Activated T-helper 1 cell treated with anti-CD3 and anti-CD28 coated beads, Interleukin-12 subunit alpha, Interleukin-12 subunit beta, Interleukin-2, Interleukin-4 antibody, amounts not matched to agents 30 ng/mL and 10 ng/mL and 1 ng/mL, durations not matched to agents 14 hours and 24 hours and 36 hours (primary cell): ENCODE measurements at regions of chr11 and their contacts with region 1.

Region 1: DNA sequence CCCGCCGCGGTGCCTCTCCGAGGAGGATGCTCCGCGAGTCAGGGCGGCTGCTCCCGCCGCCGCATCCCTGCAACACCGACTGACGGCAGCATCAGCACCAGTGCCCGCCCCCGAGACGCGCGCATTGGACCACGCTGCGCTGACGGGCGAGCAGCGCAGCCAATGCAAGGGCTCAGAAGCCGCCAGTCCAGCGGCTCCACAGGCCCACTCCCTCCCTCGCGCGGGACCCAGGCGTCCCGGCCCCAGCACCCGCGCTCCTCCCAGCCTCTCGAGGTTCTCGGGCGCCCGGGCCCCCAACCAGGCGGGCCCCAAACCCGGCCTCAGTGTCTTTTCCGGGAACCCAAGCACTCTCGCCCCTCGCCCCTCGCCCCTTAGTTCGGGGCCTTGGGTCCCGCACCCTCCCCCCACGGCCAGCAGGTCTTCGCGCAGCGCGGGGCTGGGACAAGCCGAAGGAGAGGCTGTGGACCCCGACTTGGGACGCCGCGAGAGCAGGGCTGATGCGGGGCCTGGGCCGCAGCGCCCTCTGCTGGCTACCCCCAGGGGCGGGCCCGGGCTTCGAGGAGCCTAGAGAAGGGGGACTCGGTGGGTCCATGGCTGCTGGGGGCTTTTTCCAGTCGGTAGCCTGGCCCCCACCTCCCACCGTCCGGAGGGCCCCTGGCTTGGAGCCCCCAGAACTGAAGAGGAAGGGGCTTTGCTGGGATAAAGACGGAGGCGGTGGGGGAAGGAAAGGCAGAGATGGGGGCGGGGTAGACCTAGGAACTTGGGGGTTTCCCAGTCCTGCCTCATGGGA is at the start of gene NRXN2:
- DNase-seq: peak; percentile 90
- H3K4me3 Mint-ChIP-seq: peak within 1 kb of the TSS; percentile 62
- H3K27ac Mint-ChIP-seq: peak within 1 kb of the TSS; percentile 52
- H3K4me1 Mint-ChIP-seq: peaks cover 13% of the 10 kb centered on the region
- H3K27me3 Mint-ChIP-seq: peaks cover 41% of the 10 kb centered on the region
- total RNA-seq, gene NRXN2: 0.17 and 0.23 TPM in 2 replicates

Region 2: DNA sequence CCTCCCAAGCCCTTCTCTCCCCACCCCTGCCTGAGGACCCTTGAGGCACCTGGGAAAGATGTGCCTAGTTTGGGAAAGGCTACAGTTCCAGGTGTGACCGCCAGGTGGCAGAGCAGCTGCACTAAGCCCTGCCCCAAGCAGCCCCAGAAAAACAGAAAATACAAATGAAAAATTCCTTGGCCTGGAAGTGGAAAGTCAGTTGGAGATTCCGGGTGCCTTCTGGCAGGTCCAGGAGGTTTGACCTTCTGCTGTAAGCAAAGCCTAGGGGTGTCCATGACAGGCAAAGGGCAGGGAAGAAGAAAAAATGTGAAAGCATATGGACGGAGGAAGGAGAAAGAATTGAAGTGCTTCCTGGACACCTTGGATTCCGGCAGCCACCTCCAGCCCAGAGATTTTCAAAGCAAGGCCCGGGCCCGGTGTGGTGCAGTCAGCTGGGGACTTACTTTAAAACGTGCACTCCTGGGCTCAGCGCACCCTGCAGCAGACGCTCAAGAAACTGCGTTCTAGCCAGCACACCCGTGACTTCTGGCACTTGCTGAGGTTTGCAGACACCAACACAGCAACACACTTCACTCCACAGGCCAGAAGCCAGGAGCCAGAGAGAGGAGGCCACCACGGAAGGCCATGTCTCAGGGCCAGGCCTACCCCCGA is 169.6 kb before region 1 on chr11:
- intact Hi-C with region 1: loop called (anchors 1 kb)
- DNase-seq: peak; percentile 10
- H3K4me3 Mint-ChIP-seq: no peak overlapping the region
- H3K27ac Mint-ChIP-seq: no peak overlapping the region
- H3K4me1 Mint-ChIP-seq: no peaks in the 10 kb centered on the region
- H3K27me3 Mint-ChIP-seq: peaks cover under 1% of the 10 kb centered on the region

Region 3: DNA sequence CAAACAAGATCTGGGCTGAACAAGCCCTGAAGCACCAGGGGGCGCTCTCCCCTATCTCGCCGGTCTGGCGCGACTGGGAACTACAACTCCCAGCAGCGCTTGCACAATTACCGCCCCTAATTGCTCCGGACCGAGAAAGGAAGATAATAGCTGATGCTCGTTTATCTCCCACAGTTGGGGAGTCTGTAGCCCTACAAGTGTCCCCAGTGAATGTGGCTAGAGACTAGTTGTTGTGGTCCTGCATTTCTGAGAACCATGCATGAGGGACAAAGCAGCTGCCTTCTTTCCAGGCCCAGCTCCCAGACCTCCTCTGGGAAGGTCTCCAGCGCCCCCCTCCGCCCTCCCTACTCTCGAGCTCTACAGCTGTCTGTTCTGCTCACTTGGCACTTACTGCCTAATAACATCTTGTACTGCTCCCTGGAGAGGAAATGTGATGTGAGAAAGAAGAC is 34.8 kb before region 1 on chr11:
- intact Hi-C with region 1: loop called (anchors 1 kb)
- DNase-seq: peak; percentile 82
- H3K4me3 Mint-ChIP-seq: no peak overlapping the region
- H3K27ac Mint-ChIP-seq: no peak overlapping the region
- H3K4me1 Mint-ChIP-seq: peaks cover 23% of the 10 kb centered on the region
- H3K27me3 Mint-ChIP-seq: peaks cover 20% of the 10 kb centered on the region